ENCODE measurements at regions of chr12 and their contacts with region 1.

Region 1: DNA sequence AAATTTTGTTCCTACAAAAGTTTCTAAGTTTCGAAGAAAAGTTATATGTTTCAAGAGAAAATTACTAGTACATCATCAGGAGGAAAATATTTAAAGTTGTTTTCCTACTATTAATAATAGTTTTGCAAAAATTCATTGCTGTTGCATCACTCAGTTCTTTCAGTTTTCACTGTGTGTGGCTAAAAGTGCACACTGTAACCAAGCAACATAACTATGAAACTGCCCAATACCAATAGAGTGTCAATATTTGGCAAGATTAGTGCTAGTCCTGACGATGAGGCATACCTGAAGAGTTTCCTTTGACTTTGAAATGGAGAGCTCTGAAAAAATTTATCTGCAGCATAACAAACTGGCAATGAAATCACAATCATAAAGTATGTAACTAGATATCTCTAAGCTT is 194.3 kb downstream of the CPNE8 start:
- DNase-seq: no peak
- ATAC-seq: no peak
- H3K4me3 ChIP-seq: no peak overlapping the region
- H3K27ac ChIP-seq: no peak overlapping the region
- H3K4me1 ChIP-seq: no peaks in the 10 kb centered on the region
- H3K27me3 ChIP-seq: no peaks in the 10 kb centered on the region
- CTCF ChIP-seq: no peak
- POLR2A ChIP-seq: no peak
- RAD21 ChIP-seq: no peak

Region 2: DNA sequence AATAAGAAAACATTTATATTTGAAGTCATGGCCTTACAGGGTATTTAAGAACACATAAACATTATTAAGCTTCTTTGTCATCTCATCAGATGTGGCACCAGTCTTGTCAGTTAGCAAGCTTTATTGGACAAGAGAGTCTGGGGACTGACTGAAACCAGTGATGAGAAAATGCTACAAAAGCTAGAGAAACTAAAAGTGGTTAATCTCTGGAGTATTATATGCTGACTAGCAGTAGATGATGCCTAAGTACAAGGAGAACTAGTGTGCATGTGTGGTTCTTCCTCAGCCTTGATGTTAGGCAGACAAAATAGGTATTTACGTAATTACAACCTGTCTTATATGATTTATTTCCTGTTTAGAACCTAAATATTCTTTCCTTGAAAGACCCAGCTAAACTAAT is 17.8 kb after region 1 on chr12:
- CTCF ChIA-PET with region 1: no interaction called
- POLR2A ChIA-PET with region 1: no interaction called
- dilution Hi-C with region 1: no loop called
- in situ Hi-C with region 1: no loop called
- intact Hi-C with region 1: loop called (anchors 1 kb)
- DNase-seq: no peak
- ATAC-seq: no peak
- H3K4me3 ChIP-seq: no peak overlapping the region
- H3K27ac ChIP-seq: no peak overlapping the region
- H3K4me1 ChIP-seq: no peaks in the 10 kb centered on the region
- H3K27me3 ChIP-seq: no peaks in the 10 kb centered on the region
- CTCF ChIP-seq: no peak
- POLR2A ChIP-seq: no peak
- RAD21 ChIP-seq: no peak

Region 3: DNA sequence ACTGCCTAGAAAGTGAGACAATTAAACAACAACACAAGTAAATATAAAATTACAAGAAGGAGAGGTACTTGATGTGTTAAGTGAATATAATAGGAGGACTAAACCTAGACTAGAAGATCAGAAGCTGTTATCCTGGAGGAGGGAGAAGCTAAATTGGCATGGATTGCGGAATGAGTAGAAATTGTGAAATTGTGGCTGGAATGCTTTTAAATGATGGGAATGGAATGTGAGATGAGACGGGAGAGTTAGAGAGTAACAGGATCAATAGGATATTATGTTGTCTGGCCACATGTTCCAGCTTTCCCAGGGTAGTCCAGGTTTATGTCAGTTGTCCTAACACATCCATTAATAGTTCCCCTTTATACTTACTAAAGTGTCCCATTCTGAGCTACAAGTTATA is 238.3 kb after region 1 on chr12:
- CTCF ChIA-PET with region 1: no interaction called
- POLR2A ChIA-PET with region 1: no interaction called
- dilution Hi-C with region 1: no loop called
- in situ Hi-C with region 1: no loop called
- intact Hi-C with region 1: loop called (anchors 10 kb)
- DNase-seq: no peak
- ATAC-seq: no peak
- H3K4me3 ChIP-seq: no peak overlapping the region
- H3K27ac ChIP-seq: no peak overlapping the region
- H3K4me1 ChIP-seq: no peaks in the 10 kb centered on the region
- H3K27me3 ChIP-seq: no peaks in the 10 kb centered on the region
- CTCF ChIP-seq: no peak
- POLR2A ChIP-seq: no peak
- RAD21 ChIP-seq: no peak

Measured in IMR-90 (cell line).